Body of pancreas (tissue), 4 donors: ENCODE measurements at regions of chr2 and their contacts with region 1.

Region 1: DNA sequence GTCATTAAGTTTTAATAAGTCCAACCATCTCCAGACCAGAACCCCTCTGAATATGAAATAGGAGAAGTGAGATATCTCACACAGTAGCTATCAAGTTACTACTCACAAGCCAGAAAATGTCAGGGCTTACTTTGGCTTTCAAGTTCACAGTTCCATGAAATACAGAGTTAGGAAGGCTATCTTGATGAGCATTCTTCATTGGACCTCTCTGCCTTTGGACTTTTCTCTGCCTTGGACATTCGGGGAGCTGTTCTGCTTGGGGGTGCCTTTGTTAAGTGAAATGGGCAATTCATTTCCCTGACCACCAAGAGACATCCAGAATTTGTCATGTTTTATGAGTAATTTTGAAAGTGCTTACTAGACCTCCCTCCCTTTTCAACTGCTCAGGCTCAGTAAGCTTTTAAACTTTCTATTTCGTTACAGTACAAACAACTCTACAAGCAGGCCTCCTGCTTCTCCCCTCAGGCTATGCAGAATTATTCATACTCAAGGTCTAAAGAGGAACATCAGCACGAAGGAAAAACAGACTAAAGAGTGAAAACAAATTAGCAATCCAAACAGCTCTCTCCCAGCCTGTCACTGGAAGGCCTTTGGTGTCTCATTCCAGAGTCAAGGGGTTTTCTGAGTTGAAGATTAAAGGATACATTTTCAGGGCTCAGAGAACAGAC is 95.3 kb downstream of the MREG start:
- DNase-seq: no peak
- ATAC-seq: no peak
- H3K4me3 ChIP-seq: no peak overlapping the region
- H3K27ac ChIP-seq: no peak overlapping the region
- H3K4me1 ChIP-seq: no peaks in the 10 kb centered on the region
- H3K27me3 ChIP-seq: no peaks in the 10 kb centered on the region
- CTCF ChIP-seq: no peak
- POLR2A ChIP-seq: no peak

Region 2: DNA sequence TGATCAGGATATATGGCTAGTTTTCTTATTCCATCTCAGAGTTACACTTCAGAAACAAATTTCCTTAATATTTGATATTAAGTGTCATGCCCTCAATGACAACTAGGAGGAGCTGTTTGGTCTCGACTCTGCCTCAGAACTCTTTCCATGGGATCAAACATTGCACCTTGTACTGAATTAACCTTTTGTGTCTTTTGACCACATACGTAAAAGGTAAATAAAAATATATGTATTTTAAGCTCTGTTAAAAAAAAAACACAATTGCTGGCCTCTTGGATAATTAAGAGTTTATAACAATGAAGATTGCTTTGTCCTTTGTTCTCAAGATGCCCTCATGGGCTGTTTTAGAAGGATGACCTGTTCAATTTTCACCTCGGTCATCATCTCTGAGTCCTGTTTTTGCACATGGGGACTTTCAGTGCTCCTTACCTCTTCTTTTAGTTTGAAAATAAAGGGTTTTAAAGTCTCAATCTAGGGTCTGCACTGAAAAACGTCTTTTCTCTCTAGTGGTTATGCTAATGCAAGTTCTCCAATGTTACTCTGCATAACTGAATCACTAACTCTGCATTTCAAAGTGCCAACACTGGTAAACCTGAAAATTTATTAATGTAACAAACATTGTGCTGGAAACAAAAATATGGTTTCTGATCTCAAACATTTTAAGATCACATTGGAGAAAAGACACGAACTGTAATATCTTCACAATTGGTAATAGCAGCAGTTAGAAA is 463.4 kb before region 1 on chr2:
- intact Hi-C with region 1: loop called (anchors 10 kb)
- DNase-seq: no peak
- ATAC-seq: no peak
- H3K4me3 ChIP-seq: no peak overlapping the region
- H3K27ac ChIP-seq: no peak overlapping the region
- H3K4me1 ChIP-seq: no peaks in the 10 kb centered on the region
- H3K27me3 ChIP-seq: no peaks in the 10 kb centered on the region
- CTCF ChIP-seq: peak; percentile 38 to 81 (median 70)
- POLR2A ChIP-seq: no peak